ENCODE measurements at regions of chr1 and their contacts with region 1.

Region 1: DNA sequence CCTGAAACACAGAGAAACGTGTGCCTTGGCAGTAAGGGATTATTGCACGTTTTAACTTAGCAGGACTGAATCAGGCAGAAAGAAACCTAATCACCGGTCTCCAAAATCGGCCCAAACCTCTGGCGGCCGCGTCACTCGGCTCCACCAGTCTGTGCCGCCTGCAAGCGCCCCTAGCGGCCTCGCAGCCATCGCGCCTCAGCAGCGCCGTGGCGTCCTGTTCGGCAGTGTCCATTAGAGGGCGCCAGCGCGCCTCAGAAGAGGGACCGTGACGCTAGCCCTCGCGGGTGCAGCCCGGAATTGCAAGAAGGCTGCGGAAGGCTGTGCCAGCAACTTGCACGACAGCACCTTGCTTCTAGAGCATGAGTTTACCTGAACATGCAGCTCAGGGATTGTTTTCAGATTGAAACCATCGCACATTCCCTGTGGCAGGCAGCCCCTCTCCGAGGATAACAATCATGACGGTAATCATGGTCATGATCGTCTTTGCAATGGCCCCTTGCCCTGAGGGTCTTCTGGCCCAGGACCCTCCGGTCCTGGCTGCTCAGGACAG is 164.4 kb downstream of the TRIM33 start:
- DNase-seq: peak; percentile 92
- H3K4me3 ChIP-seq: peak overlapping the region; percentile 48 to 51 (median 49)
- H3K27ac ChIP-seq: peak overlapping the region; percentile 33
- H3K4me1 ChIP-seq: peaks cover 6% of the 10 kb centered on the region
- H3K27me3 ChIP-seq: no peaks in the 10 kb centered on the region
- CTCF ChIP-seq: peak; percentile 100

Region 2: GRCh38 chr1:114428083-114428749 is 81.7 kb after region 1 on chr1:
- CTCF ChIA-PET with region 1: no interaction called
- dilution Hi-C with region 1: no loop called
- in situ Hi-C with region 1: no loop called
- intact Hi-C with region 1: loop called (anchors 5 kb)
- DNase-seq: no peak
- H3K4me3 ChIP-seq: no peak overlapping the region
- H3K27ac ChIP-seq: no peak overlapping the region
- H3K4me1 ChIP-seq: no peaks in the 10 kb centered on the region
- H3K27me3 ChIP-seq: no peaks in the 10 kb centered on the region
- CTCF ChIP-seq: peak; percentile 42 to 46

Region 3: DNA sequence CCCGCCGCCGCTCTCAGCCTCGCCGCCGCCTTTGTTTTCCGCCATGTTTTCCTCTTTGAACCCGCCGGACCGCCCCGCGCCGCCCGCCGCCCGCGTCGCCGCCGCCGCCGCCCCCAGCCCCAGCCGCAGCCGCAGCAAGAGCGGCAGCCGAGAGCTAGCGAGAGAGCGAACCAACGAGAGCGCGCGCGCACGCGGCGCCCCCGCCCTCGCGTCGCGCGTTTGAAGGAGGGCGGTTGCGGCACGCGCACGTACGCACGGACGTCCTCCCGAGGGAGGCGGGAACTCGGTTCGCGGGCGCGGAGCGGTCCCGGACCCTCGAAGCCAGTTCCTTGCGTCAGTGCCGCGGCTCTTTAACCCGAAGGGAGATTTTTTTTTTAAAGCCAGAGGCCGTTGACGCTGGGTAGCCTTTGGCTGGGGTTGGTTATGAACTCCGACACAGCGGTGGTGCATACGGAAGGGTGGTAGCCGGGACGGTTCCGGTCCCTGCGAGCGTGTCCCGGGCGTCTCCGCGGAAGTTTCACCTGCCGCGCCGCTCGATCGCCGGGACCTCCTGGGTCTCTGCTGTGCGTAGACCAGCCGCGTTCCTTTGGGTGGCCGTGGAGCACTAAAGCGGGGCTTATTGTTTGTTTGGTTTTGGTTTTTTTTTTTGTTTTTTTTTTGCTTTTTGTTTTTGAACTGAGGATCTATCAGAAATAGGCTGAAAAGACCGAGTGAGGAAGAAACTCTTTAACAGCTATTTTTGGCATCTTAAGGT is 164.7 kb after region 1 on chr1 and contains the start of gene TRIM33:
- CTCF ChIA-PET with region 1: no interaction called
- dilution Hi-C with region 1: no loop called
- in situ Hi-C with region 1: no loop called
- intact Hi-C with region 1: loop called (anchors 5 kb)
- DNase-seq: peak; percentile 93
- H3K4me3 ChIP-seq: peak within 1 kb of the TSS; percentile 99
- H3K27ac ChIP-seq: peak within 1 kb of the TSS; percentile 82
- H3K4me1 ChIP-seq: peaks cover 14% of the 10 kb centered on the region
- H3K27me3 ChIP-seq: no peaks in the 10 kb centered on the region
- CTCF ChIP-seq: no peak
- total RNA-seq, gene TRIM33: 32.8 to 43.8 TPM

Region 4: GRCh38 chr1:114531094-114531493 is 184.5 kb after region 1 on chr1:
- CTCF ChIA-PET with region 1: no interaction called
- dilution Hi-C with region 1: no loop called
- in situ Hi-C with region 1: no loop called
- intact Hi-C with region 1: no loop called
- DNase-seq: no peak
- H3K4me3 ChIP-seq: no peak overlapping the region
- H3K27ac ChIP-seq: no peak overlapping the region
- H3K4me1 ChIP-seq: no peaks in the 10 kb centered on the region
- H3K27me3 ChIP-seq: no peaks in the 10 kb centered on the region
- CTCF ChIP-seq: no peak

Region 5: GRCh38 chr1:114670083-114671010 is 323.8 kb after region 1 on chr1:
- CTCF ChIA-PET with region 1: no interaction called
- dilution Hi-C with region 1: no loop called
- in situ Hi-C with region 1: no loop called
- intact Hi-C with region 1: loop called (anchors 1 kb)
- DNase-seq: peak; percentile 97
- H3K4me3 ChIP-seq: peak overlapping the region; percentile 72 to 97 (median 97)
- H3K27ac ChIP-seq: peak overlapping the region; percentile 100
- H3K4me1 ChIP-seq: peaks cover 13% of the 10 kb centered on the region
- H3K27me3 ChIP-seq: no peaks in the 10 kb centered on the region
- CTCF ChIP-seq: no peak

Region 6: DNA sequence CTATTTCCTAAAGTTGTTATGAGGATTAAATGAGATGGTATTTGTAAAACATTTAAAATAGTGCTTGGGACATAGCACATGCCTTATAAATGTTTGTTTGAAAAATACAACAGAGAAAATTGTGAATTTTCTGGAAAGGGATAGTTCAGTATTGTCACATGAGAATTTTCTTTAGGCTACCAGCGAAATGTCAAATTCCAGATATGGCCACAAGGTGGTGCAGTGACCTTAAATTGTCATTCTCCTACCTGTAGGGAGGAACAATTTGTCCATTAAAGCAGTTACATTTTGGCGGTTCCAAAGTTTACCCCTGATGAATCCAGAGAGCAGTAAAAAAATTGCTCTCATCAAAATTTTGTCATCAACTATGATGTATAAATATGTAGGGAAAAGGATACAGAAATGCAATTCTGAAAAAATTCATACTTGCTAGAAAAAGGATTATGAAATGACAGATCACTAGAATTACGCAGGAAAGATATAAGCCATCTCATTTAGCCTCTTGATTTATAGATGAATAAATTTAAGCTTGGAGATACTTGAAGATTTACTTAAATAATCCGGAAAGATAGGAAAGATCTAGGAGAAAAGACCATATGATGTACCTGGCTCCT is 632.8 kb after region 1 on chr1:
- CTCF ChIA-PET with region 1: no interaction called
- dilution Hi-C with region 1: no loop called
- in situ Hi-C with region 1: no loop called
- intact Hi-C with region 1: loop called (anchors 10 kb)
- DNase-seq: peak; percentile 39
- H3K4me3 ChIP-seq: no peak overlapping the region
- H3K27ac ChIP-seq: no peak overlapping the region
- H3K4me1 ChIP-seq: no peaks in the 10 kb centered on the region
- H3K27me3 ChIP-seq: no peaks in the 10 kb centered on the region
- CTCF ChIP-seq: peak; percentile 70 to 72